BJ (cell line): ENCODE measurements at regions of chr16 and their contacts with region 1.

Region 1: DNA sequence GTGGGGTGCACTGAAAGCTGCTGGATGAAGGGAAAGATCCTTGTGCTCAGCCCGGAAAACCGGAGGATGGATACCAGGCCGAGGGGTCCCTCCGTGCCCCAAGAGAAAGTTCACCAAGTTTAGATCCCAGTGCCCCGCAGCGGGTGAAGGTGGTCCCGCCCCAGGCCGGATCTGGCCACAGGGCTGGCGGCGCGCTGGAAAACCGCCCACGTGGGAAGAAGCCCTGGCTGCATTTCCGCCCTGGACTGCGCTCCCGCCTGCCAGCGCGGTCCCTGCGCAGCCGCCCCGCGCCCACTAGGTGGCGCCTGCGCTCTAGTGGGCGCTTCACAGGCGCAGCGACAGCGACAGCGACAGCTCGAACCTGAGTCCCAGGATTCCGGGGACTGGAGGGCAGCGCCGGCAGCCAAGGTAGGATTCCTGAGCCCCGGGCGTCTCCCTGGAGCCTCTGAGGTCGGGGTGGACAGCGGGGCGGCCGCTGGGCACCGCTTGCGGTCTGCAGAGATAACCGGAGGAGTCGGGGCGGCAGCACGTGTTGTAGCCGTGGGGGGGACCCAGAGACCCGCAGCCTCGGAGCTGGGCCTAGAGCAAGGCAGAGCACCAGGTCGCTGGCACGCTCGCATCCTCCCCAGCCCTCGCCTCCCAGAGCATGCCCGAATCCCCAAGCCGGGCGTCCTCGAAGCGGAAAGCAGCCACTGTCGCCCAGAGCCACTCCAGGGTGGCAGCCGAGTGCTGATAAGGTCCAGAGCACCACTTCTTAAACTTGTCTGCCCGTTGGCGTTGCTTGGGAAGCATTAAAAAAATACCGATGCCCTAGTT is at the start of gene CHD9:
- DNase-seq: no peak
- H3K4me3 ChIP-seq: peak within 1 kb of the TSS; percentile 66
- H3K27me3 ChIP-seq: no peaks in the 10 kb centered on the region
- CTCF ChIP-seq: peak; percentile 99
- polyA plus RNA-seq, gene CHD9: 13.1 and 30.0 TPM in 2 replicates

Region 2: DNA sequence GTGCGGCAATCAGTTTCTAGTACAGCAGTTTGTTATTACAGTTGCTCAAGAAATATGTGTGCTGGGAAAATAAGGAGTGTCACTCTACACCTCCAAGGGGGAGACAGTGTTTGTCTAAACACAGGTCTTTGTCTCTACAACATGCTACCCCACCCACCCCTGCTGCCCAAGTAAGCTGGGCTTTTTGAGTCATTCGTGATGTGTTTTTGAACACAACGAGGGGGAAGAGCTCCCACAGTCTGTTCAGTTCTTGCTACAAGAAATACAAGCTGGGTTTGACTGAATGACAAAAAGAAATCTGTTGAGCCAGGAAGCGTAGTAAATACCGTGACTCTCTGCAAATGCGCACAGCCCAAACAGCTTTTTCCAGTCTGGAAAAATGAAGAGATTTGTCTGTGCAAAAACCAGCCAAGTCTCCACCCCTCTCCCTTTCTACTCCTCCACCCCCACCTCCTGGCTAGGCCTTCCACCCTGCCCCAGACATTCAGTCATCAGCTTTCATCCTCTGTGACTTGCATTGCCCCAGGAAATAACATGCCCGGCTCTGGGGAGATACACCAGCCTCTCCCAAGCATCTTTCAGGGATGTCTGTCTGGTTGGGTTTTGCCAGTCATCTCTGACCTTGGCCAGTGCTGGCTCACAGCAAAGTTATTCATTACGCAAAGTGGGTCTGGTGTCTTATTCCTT is 25.6 kb after region 1 on chr16:
- CTCF ChIA-PET with region 1: interaction called, 34 read pairs
- POLR2A ChIA-PET with region 1: no interaction called
- DNase-seq: peak; percentile 74
- H3K4me3 ChIP-seq: peak overlapping the region; percentile 19
- H3K27me3 ChIP-seq: no peaks in the 10 kb centered on the region
- CTCF ChIP-seq: no peak

Region 3: GRCh38 chr16:53099318-53100130 is 44.6 kb after region 1 on chr16:
- CTCF ChIA-PET with region 1: interaction called, 16 read pairs
- POLR2A ChIA-PET with region 1: no interaction called
- DNase-seq: peak; percentile 49
- H3K4me3 ChIP-seq: peak overlapping the region; percentile 33
- H3K27me3 ChIP-seq: no peaks in the 10 kb centered on the region
- CTCF ChIP-seq: no peak

Region 4: DNA sequence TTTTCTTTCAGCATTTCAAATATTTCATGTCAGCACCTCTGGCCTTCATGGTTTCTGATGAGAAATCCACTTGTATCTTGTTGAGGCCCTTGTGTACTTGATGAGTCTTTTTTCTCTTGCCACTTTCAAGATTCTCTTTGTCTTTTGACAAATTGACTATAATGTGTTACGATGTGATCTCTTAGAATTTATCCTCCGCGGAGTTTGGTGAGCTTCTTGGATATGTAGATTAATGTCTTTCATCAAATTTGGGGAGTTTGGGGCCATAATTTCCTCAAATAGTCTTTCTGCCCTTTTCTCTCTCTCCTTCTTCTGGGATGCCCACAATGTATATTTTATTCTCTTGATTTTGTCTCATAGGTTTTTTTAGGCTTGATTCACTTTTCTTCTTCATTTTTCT is 95.9 kb after region 1 on chr16:
- CTCF ChIA-PET with region 1: interaction called, 11 read pairs
- POLR2A ChIA-PET with region 1: no interaction called
- DNase-seq: no peak
- H3K4me3 ChIP-seq: no peak overlapping the region
- H3K27me3 ChIP-seq: no peaks in the 10 kb centered on the region
- CTCF ChIP-seq: no peak

Region 5: GRCh38 chr16:53207810-53208752 is 153.2 kb after region 1 on chr16:
- CTCF ChIA-PET with region 1: interaction called, 34 read pairs
- POLR2A ChIA-PET with region 1: interaction called, 4 read pairs
- DNase-seq: peak; percentile 37
- H3K4me3 ChIP-seq: peak overlapping the region; percentile 38
- H3K27me3 ChIP-seq: no peaks in the 10 kb centered on the region
- CTCF ChIP-seq: peak; percentile 61